ENCODE measurements at regions of chr2 and their contacts with region 1.

Region 1: GRCh38 chr2:219597552-219598307 is at the start of gene STK11IP:
- DNase-seq: peak; percentile 96
- ATAC-seq: peak; percentile 97
- H3K4me3 ChIP-seq: peak within 1 kb of the TSS; percentile 63
- H3K27ac ChIP-seq: peak within 1 kb of the TSS; percentile 88
- H3K4me1 ChIP-seq: peaks cover 2% of the 10 kb centered on the region
- H3K27me3 ChIP-seq: no peaks in the 10 kb centered on the region; the same call in 1 of the 2 replicates
- CTCF ChIP-seq: no peak
- POLR2A ChIP-seq: peak; percentile 82
- RAD21 ChIP-seq: no peak
- total RNA-seq, gene STK11IP: 6.7 and 19.7 TPM in 2 replicates

Region 2: GRCh38 chr2:219576493-219577388 is 21.0 kb before region 1 on chr2:
- CTCF ChIA-PET with region 1: no interaction called
- POLR2A ChIA-PET with region 1: interaction called, 4 read pairs
- dilution Hi-C with region 1: no loop called
- in situ Hi-C with region 1: no loop called
- intact Hi-C with region 1: loop called (anchors 2 kb)
- DNase-seq: peak; percentile 13
- ATAC-seq: peak; percentile 65
- H3K4me3 ChIP-seq: no peak overlapping the region
- H3K27ac ChIP-seq: no peak overlapping the region
- H3K4me1 ChIP-seq: peaks cover 11% of the 10 kb centered on the region
- H3K27me3 ChIP-seq: peaks cover 14% of the 10 kb centered on the region
- CTCF ChIP-seq: no peak
- POLR2A ChIP-seq: no peak
- RAD21 ChIP-seq: no peak

Region 3: GRCh38 chr2:219689676-219690628 is 92.2 kb after region 1 on chr2:
- CTCF ChIA-PET with region 1: no interaction called
- POLR2A ChIA-PET with region 1: no interaction called
- dilution Hi-C with region 1: no loop called
- in situ Hi-C with region 1: no loop called
- intact Hi-C with region 1: loop called (anchors 5 kb)
- DNase-seq: peak; percentile 74
- ATAC-seq: peak; percentile 69
- H3K4me3 ChIP-seq: no peak overlapping the region
- H3K27ac ChIP-seq: no peak overlapping the region
- H3K4me1 ChIP-seq: peaks cover 7% of the 10 kb centered on the region
- H3K27me3 ChIP-seq: peaks cover 2% of the 10 kb centered on the region; the same call in 1 of the 2 replicates
- CTCF ChIP-seq: peak; percentile 75
- POLR2A ChIP-seq: no peak
- RAD21 ChIP-seq: peak; percentile 67

Region 4: GRCh38 chr2:219829667-219830352 is 232.1 kb after region 1 on chr2:
- CTCF ChIA-PET with region 1: no interaction called
- POLR2A ChIA-PET with region 1: no interaction called
- dilution Hi-C with region 1: no loop called
- in situ Hi-C with region 1: no loop called
- intact Hi-C with region 1: no loop called
- DNase-seq: no peak
- ATAC-seq: no peak
- H3K4me3 ChIP-seq: no peak overlapping the region
- H3K27ac ChIP-seq: no peak overlapping the region
- H3K4me1 ChIP-seq: no peaks in the 10 kb centered on the region
- H3K27me3 ChIP-seq: peaks cover 11% of the 10 kb centered on the region
- CTCF ChIP-seq: no peak
- POLR2A ChIP-seq: no peak
- RAD21 ChIP-seq: no peak